ENCODE measurements at regions of chr15 and their contacts with region 1.

Region 1: DNA sequence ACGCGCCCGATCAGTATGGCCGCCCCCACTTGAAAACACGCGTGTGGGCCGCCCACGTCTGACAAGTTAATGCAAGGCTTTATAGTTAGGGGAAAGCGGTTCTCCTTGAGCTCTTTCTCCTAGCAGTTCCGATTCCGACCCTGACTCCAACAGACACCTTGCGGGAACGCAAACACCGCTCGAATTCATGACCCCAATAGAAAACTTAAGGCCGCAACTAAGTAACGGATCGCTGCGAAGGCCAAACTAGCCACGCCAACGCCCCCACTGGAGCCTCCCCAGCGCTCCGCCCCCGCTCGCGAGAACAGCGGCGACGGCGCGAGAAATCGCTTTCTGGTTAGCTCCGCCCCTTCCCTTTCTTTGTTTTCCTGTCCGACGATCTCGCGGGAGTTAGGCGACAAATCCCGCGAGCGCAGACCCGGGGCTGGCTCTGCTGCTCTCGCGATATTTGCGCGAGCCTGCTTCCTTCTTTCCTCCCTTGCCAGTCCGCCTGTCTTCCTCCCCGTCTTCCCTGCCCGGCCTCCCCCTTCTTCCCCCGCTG is at the start of gene IREB2:
- DNase-seq: peak; percentile 97 to 99
- H3K4me3 ChIP-seq: peak within 1 kb of the TSS; percentile 77 to 94 (median 88)
- H3K27ac ChIP-seq: peak within 1 kb of the TSS; percentile 92
- H3K4me1 ChIP-seq: no peaks in the 10 kb centered on the region
- H3K27me3 ChIP-seq: no peaks in the 10 kb centered on the region
- CTCF ChIP-seq: no peak
- EP300 ChIP-seq: no peak
- POLR2A ChIP-seq: peak; percentile 59 to 73; a peak in 2 of 3 replicates
- RAD21 ChIP-seq: no peak
- total RNA-seq, gene IREB2: 99.7 and 103 TPM in 2 replicates

Region 2: DNA sequence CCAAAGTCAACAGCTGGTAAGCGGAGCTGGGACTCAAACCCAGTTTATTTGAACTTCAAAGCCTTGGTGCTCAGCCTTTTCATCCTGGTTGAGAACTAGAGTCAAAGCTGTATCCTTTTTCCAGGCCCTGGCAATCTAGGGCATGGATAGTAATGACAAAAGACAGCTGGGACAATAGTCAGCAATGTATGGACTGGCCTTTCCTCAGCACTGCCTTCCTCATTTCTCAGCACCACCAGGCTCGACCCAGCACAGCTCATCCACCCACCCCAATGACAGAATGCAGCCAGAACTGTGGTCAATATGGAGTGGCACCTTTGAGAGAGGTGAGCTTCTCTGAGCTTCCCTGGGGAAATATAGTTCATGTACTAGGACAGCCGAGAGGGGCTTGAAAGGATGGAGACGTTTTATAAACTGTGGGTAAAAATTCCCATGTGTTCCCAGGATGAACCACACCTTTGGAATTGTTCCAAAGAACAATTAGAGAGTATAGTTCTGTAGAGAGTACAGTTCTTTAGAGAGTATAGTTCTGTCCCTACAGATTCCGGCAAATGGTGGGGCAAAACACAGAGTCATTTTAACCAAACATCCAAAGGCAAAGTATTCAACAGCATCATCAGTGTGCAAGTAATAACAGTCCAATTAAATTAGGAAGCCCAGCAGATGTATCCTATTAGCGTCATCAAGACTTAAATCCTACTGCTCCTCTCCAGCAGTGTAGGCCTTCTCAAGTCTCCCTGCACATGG is 30.1 kb before region 1 on chr15:
- CTCF ChIA-PET with region 1: no interaction called
- POLR2A ChIA-PET with region 1: interaction called, 13 read pairs
- DNase-seq: no peak
- H3K4me3 ChIP-seq: no peak overlapping the region
- H3K27ac ChIP-seq: no peak overlapping the region
- H3K4me1 ChIP-seq: peaks cover 0 to 8% (median 5%) of the 10 kb centered on the region in 4 experiments; a peak in 5 of 7 replicates
- H3K27me3 ChIP-seq: no peaks in the 10 kb centered on the region; a peak in 2 of 7 replicates
- CTCF ChIP-seq: no peak
- EP300 ChIP-seq: no peak
- POLR2A ChIP-seq: no peak
- RAD21 ChIP-seq: no peak

Region 3: GRCh38 chr15:78453447-78453846 is 15.6 kb after region 1 on chr15:
- CTCF ChIA-PET with region 1: interaction called, 6 read pairs
- POLR2A ChIA-PET with region 1: interaction called, 51 read pairs
- DNase-seq: no peak
- H3K4me3 ChIP-seq: no peak overlapping the region
- H3K27ac ChIP-seq: no peak overlapping the region
- H3K4me1 ChIP-seq: no peaks in the 10 kb centered on the region; a peak in 1 of 7 replicates
- H3K27me3 ChIP-seq: no peaks in the 10 kb centered on the region
- CTCF ChIP-seq: no peak
- EP300 ChIP-seq: no peak
- POLR2A ChIP-seq: no peak
- RAD21 ChIP-seq: no peak